Prostate gland (tissue), 2 donors: ENCODE measurements at regions of chr15 and their contacts with region 1.

Region 1: DNA sequence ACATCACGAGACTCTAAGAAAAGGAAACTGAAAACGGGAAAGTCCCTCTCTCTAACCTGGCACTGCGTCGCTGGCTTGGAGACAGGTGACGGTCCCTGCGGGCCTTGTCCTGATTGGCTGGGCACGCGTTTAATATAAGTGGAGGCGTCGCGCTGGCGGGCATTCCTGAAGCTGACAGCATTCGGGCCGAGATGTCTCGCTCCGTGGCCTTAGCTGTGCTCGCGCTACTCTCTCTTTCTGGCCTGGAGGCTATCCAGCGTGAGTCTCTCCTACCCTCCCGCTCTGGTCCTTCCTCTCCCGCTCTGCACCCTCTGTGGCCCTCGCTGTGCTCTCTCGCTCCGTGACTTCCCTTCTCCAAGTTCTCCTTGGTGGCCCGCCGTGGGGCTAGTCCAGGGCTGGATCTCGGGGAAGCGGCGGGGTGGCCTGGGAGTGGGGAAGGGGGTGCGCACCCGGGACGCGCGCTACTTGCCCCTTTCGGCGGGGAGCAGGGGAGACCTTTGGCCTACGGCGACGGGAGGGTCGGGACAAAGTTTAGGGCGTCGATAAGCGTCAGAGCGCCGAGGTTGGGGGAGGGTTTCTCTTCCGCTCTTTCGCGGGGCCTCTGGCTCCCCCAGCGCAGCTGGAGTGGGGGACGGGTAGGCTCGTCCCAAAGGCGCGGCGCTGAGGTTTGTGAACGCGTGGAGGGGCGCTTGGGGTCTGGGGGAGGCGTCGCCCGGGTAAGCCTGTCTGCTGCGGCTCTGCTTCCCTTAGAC is at the start of gene B2M:
- DNase-seq: peak; percentile 97
- H3K4me3 ChIP-seq: peak within 1 kb of the TSS; percentile 80 to 96
- H3K27ac ChIP-seq: peak within 1 kb of the TSS; percentile 97 to 99
- H3K4me1 ChIP-seq: no peaks in the 10 kb centered on the region
- H3K27me3 ChIP-seq: no peaks in the 10 kb centered on the region
- CTCF ChIP-seq: peak in 1 of 4 experiments; percentile 23
- POLR2A ChIP-seq: peak; percentile 100
- total RNA-seq, gene B2M: 2,014 to 2,775 TPM

Region 2: GRCh38 chr15:44286814-44287452 is 424.6 kb before region 1 on chr15:
- intact Hi-C with region 1: loop called (anchors 5 kb)
- DNase-seq: no peak
- H3K4me3 ChIP-seq: peak overlapping the region; percentile 84 to 85
- H3K27ac ChIP-seq: peak overlapping the region in 1 of 2 donors; percentile 89
- H3K4me1 ChIP-seq: no peaks in the 10 kb centered on the region
- H3K27me3 ChIP-seq: no peaks in the 10 kb centered on the region
- CTCF ChIP-seq: peak in 2 of 4 experiments; percentile 29 to 34
- POLR2A ChIP-seq: no peak

Region 3: GRCh38 chr15:44426975-44427755 is 284.4 kb before region 1 on chr15 and contains the start of gene CTDSPL2:
- intact Hi-C with region 1: loop called (anchors 5 kb)
- DNase-seq: peak; percentile 98
- H3K4me3 ChIP-seq: peak within 1 kb of the TSS; percentile 61 to 68
- H3K27ac ChIP-seq: peak within 1 kb of the TSS; percentile 92 to 94
- H3K4me1 ChIP-seq: no peaks in the 10 kb centered on the region
- H3K27me3 ChIP-seq: no peaks in the 10 kb centered on the region
- CTCF ChIP-seq: peak in 3 of 4 experiments; percentile 34 to 63 (median 50)
- POLR2A ChIP-seq: peak; percentile 48
- total RNA-seq, gene CTDSPL2: 32.5 to 67.5 TPM

Region 4: DNA sequence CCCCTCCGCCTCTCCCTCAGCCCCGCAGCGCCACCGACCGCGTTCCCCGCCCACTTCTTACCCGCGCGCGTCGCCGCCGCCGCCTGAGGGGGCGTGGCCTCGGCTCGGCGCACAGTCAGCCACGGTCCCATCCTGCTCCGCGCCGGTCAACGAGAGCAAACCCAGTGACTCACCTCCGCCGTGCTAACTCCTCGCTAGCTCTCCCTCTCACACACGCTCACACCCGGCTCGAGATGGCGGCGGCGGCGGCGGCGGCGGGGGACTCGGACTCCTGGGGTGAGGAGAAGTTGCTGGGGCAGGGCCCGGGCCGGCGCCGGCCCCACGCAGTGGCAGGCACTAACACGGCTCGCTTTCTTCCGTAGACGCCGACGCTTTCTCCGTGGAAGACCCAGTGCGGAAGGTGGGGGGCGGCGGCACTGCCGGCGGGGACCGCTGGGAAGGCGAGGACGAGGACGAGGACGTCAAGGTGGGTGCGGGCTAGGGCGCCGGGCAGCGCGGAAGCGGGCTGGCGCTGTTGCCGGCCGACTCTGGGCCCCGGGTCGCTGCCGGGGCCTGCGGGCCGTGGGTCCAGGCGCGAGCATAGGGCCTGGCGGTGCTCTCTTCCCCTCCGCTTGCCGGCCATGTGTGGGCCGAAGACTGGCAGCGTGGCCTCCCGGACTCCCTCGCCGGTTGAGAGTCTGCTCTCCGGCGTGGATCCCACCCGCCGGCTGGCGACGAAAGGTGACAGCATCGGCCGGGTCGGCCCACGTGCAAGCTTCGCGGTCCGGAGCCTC is 174.4 kb before region 1 on chr15 and contains the start of gene EIF3J:
- intact Hi-C with region 1: loop called (anchors 5 kb)
- DNase-seq: peak; percentile 96
- H3K4me3 ChIP-seq: peak within 1 kb of the TSS; percentile 75 to 95
- H3K27ac ChIP-seq: peak within 1 kb of the TSS; percentile 94
- H3K4me1 ChIP-seq: peaks cover 1% of the 10 kb centered on the region
- H3K27me3 ChIP-seq: no peaks in the 10 kb centered on the region
- CTCF ChIP-seq: peak in 1 of 4 experiments; percentile 35
- POLR2A ChIP-seq: peak; percentile 70
- total RNA-seq, gene EIF3J: 33.1 to 51.7 TPM

Region 5: DNA sequence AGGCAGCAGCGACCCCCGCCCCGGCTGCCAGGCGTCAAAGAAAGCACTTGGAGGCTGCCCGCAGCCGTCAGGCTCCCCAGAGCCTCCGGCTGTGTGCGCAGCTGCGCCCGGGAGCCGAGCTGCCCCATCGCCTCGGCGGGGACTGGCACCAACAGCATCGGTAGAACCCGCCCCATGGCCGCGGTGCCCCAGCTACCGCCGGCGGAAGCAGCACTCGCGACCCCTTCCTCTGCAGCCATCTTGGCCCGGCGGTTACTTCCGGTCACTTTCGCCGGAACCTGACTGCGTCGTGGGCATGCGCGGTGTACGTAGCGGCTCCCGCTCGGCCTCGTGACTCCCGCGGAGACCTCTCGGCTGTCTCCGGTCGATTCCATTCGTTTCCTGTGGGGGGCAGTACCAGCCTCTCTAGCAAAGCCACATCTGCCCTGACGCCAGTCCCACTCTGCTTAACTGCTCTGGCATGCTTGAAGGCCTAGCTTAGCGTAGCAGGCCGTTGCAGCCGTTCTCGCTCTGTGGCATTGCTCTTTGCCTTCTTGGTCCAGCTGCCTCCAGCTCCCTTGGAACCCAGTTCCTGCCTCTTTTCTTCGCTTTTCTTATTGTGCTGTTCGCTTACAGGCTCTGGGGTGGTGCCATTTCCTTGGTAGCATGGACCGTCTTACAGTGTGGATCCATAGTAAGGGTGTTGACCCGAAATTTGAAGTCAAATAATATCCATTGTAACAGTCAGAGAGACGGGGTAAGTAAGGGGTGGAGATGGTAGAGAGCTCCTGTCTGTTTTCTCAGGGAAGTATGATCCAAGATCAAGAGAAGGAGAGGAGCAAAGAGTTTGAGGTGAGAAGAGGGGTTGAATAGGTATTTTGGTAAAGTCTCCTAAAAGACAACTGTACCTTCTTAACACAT is 47.9 kb before region 1 on chr15 and contains the start of gene SPG11:
- intact Hi-C with region 1: loop called (anchors 5 kb)
- DNase-seq: peak; percentile 96
- H3K4me3 ChIP-seq: peak within 1 kb of the TSS; percentile 91 to 98
- H3K27ac ChIP-seq: peak within 1 kb of the TSS; percentile 92 to 96
- H3K4me1 ChIP-seq: no peaks in the 10 kb centered on the region
- H3K27me3 ChIP-seq: no peaks in the 10 kb centered on the region
- CTCF ChIP-seq: peak; percentile 87 to 99 (median 97)
- POLR2A ChIP-seq: peak; percentile 81
- total RNA-seq, gene SPG11: 86.2 to 93.7 TPM

Region 6: GRCh38 chr15:44728576-44729407 is 17.3 kb after region 1 on chr15:
- intact Hi-C with region 1: loop called (anchors 1 kb)
- DNase-seq: peak; percentile 95
- H3K4me3 ChIP-seq: peak overlapping the region; percentile 47 to 51
- H3K27ac ChIP-seq: peak overlapping the region; percentile 94 to 97
- H3K4me1 ChIP-seq: no peaks in the 10 kb centered on the region
- H3K27me3 ChIP-seq: no peaks in the 10 kb centered on the region
- CTCF ChIP-seq: no peak
- POLR2A ChIP-seq: peak; percentile 96